Right ventricle myocardium inferior (tissue), 1 donor: ENCODE measurements at regions of chr4 and their contacts with region 1.

Region 1: GRCh38 chr4:87848622-87849351 is 16.0 kb downstream of the MEPE start:
- DNase-seq: no peak
- ATAC-seq: peak; percentile 82

Region 2: DNA sequence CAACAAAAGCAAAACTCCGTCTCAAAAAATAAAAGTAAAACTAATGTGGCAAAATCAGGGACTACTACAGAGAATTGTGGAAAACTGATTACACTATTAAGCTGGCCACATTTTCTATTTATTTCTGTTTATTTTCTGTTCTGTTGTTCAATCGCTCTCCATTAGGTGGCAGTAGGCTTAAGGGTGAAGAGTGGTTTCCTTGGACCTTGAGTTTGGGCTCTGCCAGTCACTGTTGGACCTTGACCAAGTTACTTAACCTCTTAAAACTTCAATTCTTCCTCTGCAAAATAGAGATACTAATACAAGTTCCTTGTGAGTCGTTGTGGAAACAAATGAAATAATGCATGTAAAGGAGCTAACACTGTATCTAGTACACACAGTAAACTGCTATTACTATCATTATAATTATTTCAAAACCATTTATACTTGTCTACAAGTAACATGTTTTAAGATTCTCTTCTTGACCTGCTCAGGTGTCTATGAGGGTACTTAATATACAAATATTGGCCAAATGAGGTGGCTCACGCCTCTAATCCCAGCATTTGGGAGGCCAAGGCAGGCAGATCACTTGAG is 473.0 kb before region 1 on chr4:
- intact Hi-C with region 1: loop called (anchors 5 kb)
- DNase-seq: no peak
- ATAC-seq: peak; percentile 78

Region 3: DNA sequence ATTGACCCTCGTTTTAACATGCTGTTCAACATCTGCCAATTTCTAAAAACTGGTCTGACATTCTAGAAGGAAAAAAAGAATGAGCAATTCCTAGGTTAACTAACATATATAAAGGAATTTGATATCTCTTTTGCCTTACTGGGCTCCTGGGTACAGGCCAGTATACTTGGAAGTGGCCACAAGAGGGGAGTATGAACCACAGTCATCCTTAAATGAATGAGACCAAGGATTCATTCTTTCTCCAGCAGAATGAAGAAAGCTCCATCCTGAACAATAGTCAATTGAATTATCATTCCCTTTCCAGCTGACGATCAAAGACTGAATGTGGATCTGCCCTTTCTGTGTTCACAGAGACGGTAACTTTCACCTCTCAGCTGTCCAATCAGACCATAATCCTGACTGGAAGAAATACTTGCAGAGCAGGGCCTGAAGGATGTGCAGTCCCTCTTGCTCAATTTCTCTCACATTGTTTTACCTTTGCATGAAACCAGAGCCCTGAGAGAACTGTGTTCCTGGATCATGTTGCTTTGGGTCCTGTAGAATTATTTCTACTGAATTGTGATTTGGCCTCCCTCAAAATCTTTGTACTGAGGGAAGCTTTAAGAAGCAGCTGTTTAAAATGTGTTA is 304.8 kb before region 1 on chr4:
- intact Hi-C with region 1: loop called (anchors 2 kb)
- DNase-seq: no peak
- ATAC-seq: peak; percentile 39

Region 4: GRCh38 chr4:87679449-87680169 is 169.2 kb before region 1 on chr4:
- intact Hi-C with region 1: loop called (anchors 2 kb)
- DNase-seq: no peak
- ATAC-seq: peak; percentile 86

Region 5: GRCh38 chr4:87973283-87974169 is 124.7 kb after region 1 on chr4:
- intact Hi-C with region 1: loop called (anchors 1 kb)
- DNase-seq: no peak
- ATAC-seq: peak; percentile 52

Region 6: GRCh38 chr4:88211473-88212252 is 362.9 kb after region 1 on chr4:
- intact Hi-C with region 1: loop called (anchors 5 kb)
- DNase-seq: no peak
- ATAC-seq: no peak